Activated naive CD4-positive, alpha-beta T cell treated with anti-CD3 and anti-CD28 coated beads for 36 hours (primary cell): ENCODE measurements at regions of chr7 and their contacts with region 1.

Region 1: GRCh38 chr7:92833024-92833765 is 3.2 kb downstream of the CDK6 start:
- DNase-seq: peak; percentile 94
- H3K4me3 Mint-ChIP-seq: peak overlapping the region; percentile 89
- H3K27ac Mint-ChIP-seq: peak overlapping the region; percentile 98
- H3K4me1 Mint-ChIP-seq: peaks cover 36% of the 10 kb centered on the region
- H3K27me3 Mint-ChIP-seq: peaks cover 5% of the 10 kb centered on the region

Region 2: DNA sequence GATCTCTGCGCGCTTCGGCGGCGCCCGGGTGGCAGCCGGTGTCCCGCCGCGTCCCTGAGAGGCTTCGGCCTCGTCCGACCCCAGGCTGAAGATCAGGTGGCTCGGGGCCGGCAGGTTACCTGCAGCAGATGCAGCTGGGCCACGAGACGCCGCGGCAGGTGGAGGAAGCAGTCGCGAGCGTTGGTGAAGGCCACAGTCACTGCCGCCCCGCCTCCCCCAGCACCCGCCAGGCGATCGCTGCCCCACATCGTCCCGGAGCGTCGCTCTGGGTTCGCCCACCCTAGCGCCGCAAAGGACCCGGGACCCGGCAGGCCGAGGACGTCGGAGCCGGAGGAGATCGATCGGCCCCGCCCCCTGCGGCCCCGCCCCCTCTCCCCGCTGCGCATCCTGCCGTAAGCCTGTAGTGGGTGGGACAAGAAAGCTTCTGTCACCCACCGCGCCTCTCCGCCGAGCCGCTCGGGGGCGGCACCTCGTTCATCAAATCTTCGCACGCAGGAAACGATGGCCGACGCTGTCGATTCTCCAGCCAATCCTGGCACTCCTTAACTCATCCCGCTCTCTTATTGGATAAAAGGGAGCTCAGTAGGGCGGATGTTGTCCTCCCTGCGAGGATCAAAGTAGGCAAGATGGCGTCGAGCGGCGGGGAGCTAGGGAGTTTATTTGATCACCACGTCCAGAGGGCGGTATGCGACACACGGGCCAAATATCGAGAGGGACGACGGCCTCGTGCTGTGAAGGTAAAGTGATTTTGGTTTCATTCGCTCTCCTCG is 304.8 kb before region 1 on chr7 and contains the starts of genes PEX1 and RBM48:
- CTCF ChIA-PET with region 1: no interaction called
- intact Hi-C with region 1: loop called (anchors 1 kb)
- DNase-seq: peak; percentile 97
- H3K4me3 Mint-ChIP-seq: peak within 1 kb of the TSS; percentile 84
- H3K27ac Mint-ChIP-seq: peak within 1 kb of the TSS; percentile 91
- H3K4me1 Mint-ChIP-seq: peaks cover 22% of the 10 kb centered on the region
- H3K27me3 Mint-ChIP-seq: no peaks in the 10 kb centered on the region
- total RNA-seq, gene PEX1: 12.9 to 13.2 TPM
- total RNA-seq, gene RBM48: 11.3 to 12.9 TPM

Region 3: GRCh38 chr7:92648067-92648466 is 185.1 kb before region 1 on chr7:
- CTCF ChIA-PET with region 1: interaction called, 4 read pairs
- intact Hi-C with region 1: loop called (anchors 1 kb)
- DNase-seq: no peak
- H3K4me3 Mint-ChIP-seq: no peak overlapping the region
- H3K27ac Mint-ChIP-seq: peak overlapping the region; percentile 88
- H3K4me1 Mint-ChIP-seq: peaks cover 89% of the 10 kb centered on the region
- H3K27me3 Mint-ChIP-seq: no peaks in the 10 kb centered on the region

Region 4: GRCh38 chr7:92731335-92732063 is 101.7 kb before region 1 on chr7:
- CTCF ChIA-PET with region 1: interaction called, 5 read pairs
- intact Hi-C with region 1: loop called (anchors 1 kb)
- DNase-seq: peak; percentile 66
- H3K4me3 Mint-ChIP-seq: peak overlapping the region; percentile 9
- H3K27ac Mint-ChIP-seq: peak overlapping the region; percentile 95
- H3K4me1 Mint-ChIP-seq: peaks cover 64% of the 10 kb centered on the region
- H3K27me3 Mint-ChIP-seq: no peaks in the 10 kb centered on the region

Region 5: GRCh38 chr7:92880212-92881090 is 47.3 kb after region 1 on chr7:
- CTCF ChIA-PET with region 1: no interaction called
- intact Hi-C with region 1: loop called (anchors 2 kb)
- DNase-seq: peak; percentile 43
- H3K4me3 Mint-ChIP-seq: no peak overlapping the region
- H3K27ac Mint-ChIP-seq: no peak overlapping the region
- H3K4me1 Mint-ChIP-seq: peaks cover 34% of the 10 kb centered on the region
- H3K27me3 Mint-ChIP-seq: peaks cover 9% of the 10 kb centered on the region

Region 6: GRCh38 chr7:93147363-93147762 is 314.2 kb after region 1 on chr7:
- CTCF ChIA-PET with region 1: no interaction called
- intact Hi-C with region 1: loop called (anchors 2 kb)
- DNase-seq: peak; percentile 54
- H3K4me3 Mint-ChIP-seq: peak overlapping the region; percentile 81
- H3K27ac Mint-ChIP-seq: peak overlapping the region; percentile 43
- H3K4me1 Mint-ChIP-seq: peaks cover 22% of the 10 kb centered on the region
- H3K27me3 Mint-ChIP-seq: no peaks in the 10 kb centered on the region